ENCODE measurements at regions of chr12 and their contacts with region 1.

Region 1: DNA sequence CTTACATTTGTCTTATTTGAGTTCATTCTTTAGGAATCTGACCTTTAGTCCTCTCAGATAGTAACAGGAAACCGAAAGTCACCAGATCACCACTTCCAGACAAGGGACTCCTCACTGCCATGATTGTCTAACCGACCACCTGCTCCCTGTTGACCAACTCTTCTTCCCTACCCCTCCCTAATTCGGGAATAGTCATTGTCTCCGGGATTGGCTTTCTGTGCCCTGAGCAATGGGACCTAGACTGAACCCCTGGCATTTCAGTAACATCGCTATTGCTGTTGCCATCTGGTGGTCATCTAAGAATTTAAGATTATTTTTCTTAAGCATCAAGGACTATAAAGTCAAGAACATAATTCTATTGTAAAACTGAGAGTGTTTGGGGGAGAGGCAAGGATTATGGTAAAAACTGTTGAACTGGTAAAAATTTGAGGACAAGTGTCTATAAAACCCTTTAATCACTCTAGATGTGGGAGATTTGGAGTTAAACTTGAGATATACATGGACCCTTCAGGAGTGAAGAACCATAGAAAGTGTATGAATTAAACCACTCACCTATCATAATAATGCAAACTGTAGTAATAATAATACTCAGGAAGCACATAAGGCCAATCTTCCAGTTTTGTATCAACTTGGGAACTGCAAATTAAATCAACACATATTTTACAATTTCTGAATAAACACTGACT is 6.3 kb downstream of the CLEC2A start:
- DNase-seq: peak; percentile 57
- H3K4me3 Mint-ChIP-seq: peak overlapping the region; percentile 33
- H3K27ac Mint-ChIP-seq: no peak overlapping the region
- H3K4me1 Mint-ChIP-seq: peaks cover 6% of the 10 kb centered on the region
- H3K27me3 Mint-ChIP-seq: no peaks in the 10 kb centered on the region
- CTCF ChIP-seq: peak; percentile 46

Region 2: DNA sequence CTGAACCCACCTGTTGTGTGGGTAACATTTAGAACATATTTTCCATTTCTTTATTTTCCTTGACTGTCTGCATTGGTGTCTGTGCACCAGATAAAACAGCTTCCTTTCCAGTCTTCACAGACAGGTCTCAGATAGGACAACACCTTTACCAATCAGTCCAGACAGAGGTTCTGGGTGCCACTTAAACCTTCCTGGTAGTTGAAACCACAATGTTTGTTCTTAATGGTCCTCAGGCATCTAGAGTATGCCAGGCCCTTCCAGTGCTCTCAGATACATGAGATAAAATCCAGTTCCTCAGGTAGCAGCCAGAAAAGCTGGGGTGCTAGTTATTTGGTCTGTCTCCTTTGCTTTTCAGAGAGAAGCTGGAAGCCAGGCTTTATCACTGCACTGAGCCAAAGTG is 263.4 kb before region 1 on chr12:
- CTCF ChIA-PET with region 1: no interaction called
- POLR2A ChIA-PET with region 1: no interaction called
- intact Hi-C with region 1: no loop called
- DNase-seq: no peak
- H3K4me3 Mint-ChIP-seq: no peak overlapping the region
- H3K27ac Mint-ChIP-seq: no peak overlapping the region
- H3K4me1 Mint-ChIP-seq: peaks cover 5% of the 10 kb centered on the region
- H3K27me3 Mint-ChIP-seq: no peaks in the 10 kb centered on the region
- CTCF ChIP-seq: no peak

Region 3: GRCh38 chr12:9673404-9674225 is 252.2 kb before region 1 on chr12:
- CTCF ChIA-PET with region 1: no interaction called
- POLR2A ChIA-PET with region 1: no interaction called
- intact Hi-C with region 1: no loop called
- DNase-seq: peak; percentile 94
- H3K4me3 Mint-ChIP-seq: no peak overlapping the region
- H3K27ac Mint-ChIP-seq: no peak overlapping the region
- H3K4me1 Mint-ChIP-seq: peaks cover 19% of the 10 kb centered on the region
- H3K27me3 Mint-ChIP-seq: no peaks in the 10 kb centered on the region
- CTCF ChIP-seq: no peak

Region 4: DNA sequence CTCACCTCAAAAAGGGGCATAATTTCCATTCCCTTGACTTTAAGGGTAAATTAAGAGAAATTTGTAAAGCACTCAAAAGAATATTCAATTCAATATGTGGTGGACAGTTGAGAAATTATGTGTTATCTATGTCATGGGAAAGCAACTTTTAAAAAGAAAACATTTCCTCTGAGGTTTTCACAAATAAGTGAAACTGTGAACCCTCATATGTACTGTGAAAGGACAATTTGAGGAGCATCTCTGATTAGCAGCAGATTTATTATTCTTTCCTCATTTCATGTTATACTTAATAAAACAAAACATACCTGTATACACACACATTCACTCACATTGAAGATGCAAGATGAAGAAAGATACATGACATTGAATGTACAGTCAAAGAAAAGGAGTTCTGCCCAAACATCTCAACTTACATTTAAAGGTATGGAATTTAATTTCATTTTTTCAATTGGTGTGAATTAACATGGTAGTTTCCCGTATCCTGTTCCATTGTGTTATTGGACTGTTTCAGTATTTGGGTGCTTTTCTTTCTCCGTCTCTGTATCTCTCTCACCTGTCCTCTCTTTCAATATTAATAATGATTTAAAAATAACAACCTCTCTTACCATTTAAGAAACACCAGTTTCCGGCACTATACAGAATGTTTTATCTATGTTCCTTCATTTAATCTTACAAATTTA is 98.5 kb before region 1 on chr12 and contains the start of gene KLRF1:
- CTCF ChIA-PET with region 1: interaction called, 12 read pairs
- POLR2A ChIA-PET with region 1: no interaction called
- intact Hi-C with region 1: no loop called
- DNase-seq: no peak
- H3K4me3 Mint-ChIP-seq: no peak within 1 kb of the TSS
- H3K27ac Mint-ChIP-seq: no peak within 1 kb of the TSS
- H3K4me1 Mint-ChIP-seq: no peaks in the 10 kb centered on the region
- H3K27me3 Mint-ChIP-seq: no peaks in the 10 kb centered on the region
- CTCF ChIP-seq: no peak
- total RNA-seq, gene KLRF1: not detected in 2 replicates

Region 5: DNA sequence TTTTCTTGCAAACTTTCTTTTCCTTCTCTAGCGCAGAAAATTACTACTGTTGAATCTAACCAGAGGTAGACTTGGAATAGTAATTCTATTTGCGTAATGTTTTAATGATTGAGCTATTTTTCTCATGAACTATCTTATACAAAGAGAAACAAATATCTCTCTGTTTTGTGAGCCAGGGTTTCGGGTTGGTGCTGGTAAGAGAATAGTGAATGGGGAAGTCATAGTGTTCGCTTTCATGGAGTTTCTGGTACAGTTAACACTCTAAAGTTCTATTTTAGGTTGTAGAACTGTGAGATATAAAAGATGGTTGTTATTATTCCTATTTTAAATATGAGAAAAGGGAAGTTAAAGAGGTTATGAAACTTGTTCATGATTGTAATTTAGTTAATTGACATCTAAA is 66.4 kb after region 1 on chr12:
- CTCF ChIA-PET with region 1: no interaction called
- POLR2A ChIA-PET with region 1: no interaction called
- intact Hi-C with region 1: no loop called
- DNase-seq: no peak
- H3K4me3 Mint-ChIP-seq: no peak overlapping the region
- H3K27ac Mint-ChIP-seq: no peak overlapping the region
- H3K4me1 Mint-ChIP-seq: no peaks in the 10 kb centered on the region
- H3K27me3 Mint-ChIP-seq: peaks cover 36% of the 10 kb centered on the region
- CTCF ChIP-seq: no peak

Region 6: DNA sequence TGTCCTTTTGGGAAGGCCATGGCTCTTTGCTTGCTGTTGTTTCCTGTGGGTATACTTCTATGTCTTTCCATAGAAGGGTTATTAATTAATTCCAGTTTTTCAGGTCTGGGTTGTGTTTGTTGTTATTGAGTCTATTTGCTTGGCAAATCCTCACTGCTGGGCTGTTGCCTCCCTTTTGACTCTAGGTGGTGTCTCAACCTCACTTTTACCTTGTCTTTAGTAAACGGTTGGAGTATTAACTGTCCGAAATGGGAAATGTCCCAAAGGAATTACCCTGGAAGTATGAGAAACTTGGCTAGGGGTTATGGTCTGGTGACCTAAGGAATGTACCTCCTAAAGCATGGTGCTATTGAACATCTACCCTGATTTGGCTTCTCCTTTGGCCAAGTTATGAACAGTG is 941.5 kb after region 1 on chr12:
- CTCF ChIA-PET with region 1: no interaction called
- POLR2A ChIA-PET with region 1: no interaction called
- intact Hi-C with region 1: no loop called
- DNase-seq: no peak
- H3K4me3 Mint-ChIP-seq: no peak overlapping the region
- H3K27ac Mint-ChIP-seq: no peak overlapping the region
- H3K4me1 Mint-ChIP-seq: no peaks in the 10 kb centered on the region
- H3K27me3 Mint-ChIP-seq: no peaks in the 10 kb centered on the region
- CTCF ChIP-seq: no peak